Heart right ventricle (tissue), 16 donors: ENCODE measurements at regions of chr10 and their contacts with region 1.

Region 1: GRCh38 chr10:60964257-60965235 is 20.6 kb upstream of the RHOBTB1 start:
- DNase-seq: peak; percentile 40 to 80
- ATAC-seq: peak in 7 of 8 donors; percentile 66 to 93 (median 90)
- H3K4me3 ChIP-seq: peak overlapping the region in 1 of 10 donors; percentile 2
- H3K27ac ChIP-seq: peak overlapping the region in 7 of 10 donors; percentile 39 to 62 (median 54)
- H3K4me1 ChIP-seq: peaks cover 0 to 25% (median 10%) of the 10 kb centered on the region in 9 donors
- H3K27me3 ChIP-seq: no peaks in the 10 kb centered on the region
- CTCF ChIP-seq: peak; percentile 70 to 92 (median 86)

Region 2: GRCh38 chr10:60883187-60883586 is 81.4 kb before region 1 on chr10:
- intact Hi-C with region 1: loop called in 9 of 10 experiments (anchors 1 to 10 kb)
- DNase-seq: peak in 1 of 2 donors; percentile 38
- ATAC-seq: peak; percentile 67 to 95 (median 90)
- H3K4me3 ChIP-seq: no peak overlapping the region
- H3K27ac ChIP-seq: peak overlapping the region in 7 of 10 donors; percentile 2 to 64 (median 52)
- H3K4me1 ChIP-seq: peaks cover 0 to 29% (median 11%) of the 10 kb centered on the region in 9 donors
- H3K27me3 ChIP-seq: no peaks in the 10 kb centered on the region
- CTCF ChIP-seq: peak; percentile 29 to 70 (median 55)

Region 3: GRCh38 chr10:61010863-61011262 is 46.3 kb after region 1 on chr10:
- intact Hi-C with region 1: no loop called
- DNase-seq: no peak
- ATAC-seq: no peak
- H3K4me3 ChIP-seq: no peak overlapping the region
- H3K27ac ChIP-seq: no peak overlapping the region
- H3K4me1 ChIP-seq: no peaks in the 10 kb centered on the region
- H3K27me3 ChIP-seq: no peaks in the 10 kb centered on the region
- CTCF ChIP-seq: no peak

Region 4: DNA sequence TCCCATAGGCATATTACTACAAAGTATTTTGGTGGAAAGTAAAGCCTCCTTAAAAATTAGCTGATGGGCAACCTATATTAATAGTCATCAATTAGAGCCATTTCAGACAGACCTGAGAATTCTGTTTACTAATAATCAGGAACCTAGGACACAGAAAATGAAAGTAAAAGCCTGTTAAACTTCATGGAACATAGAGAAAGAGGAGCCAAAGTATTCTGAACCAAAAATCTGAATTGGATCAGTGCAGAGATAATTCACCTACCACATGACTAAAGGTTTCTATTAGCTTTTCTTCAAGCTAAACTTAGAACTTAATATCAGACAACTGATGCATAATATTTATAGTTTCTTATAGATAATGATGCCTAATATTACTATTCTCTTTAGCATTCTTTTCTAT is 183.9 kb after region 1 on chr10:
- intact Hi-C with region 1: loop called in 1 of 10 experiments (anchors 5 kb)
- DNase-seq: no peak
- ATAC-seq: no peak
- H3K4me3 ChIP-seq: no peak overlapping the region
- H3K27ac ChIP-seq: no peak overlapping the region
- H3K4me1 ChIP-seq: peaks cover 0 to 4% (median 0%) of the 10 kb centered on the region in 9 donors
- H3K27me3 ChIP-seq: no peaks in the 10 kb centered on the region
- CTCF ChIP-seq: no peak